ENCODE measurements at regions of chr16 and their contacts with region 1.

Region 1: GRCh38 chr16:27367461-27368357 is 34.3 kb upstream of the IL21R start:
- DNase-seq: peak; percentile 73 to 97
- ATAC-seq: peak; percentile 85 to 88 (median 87)
- H3K4me3 ChIP-seq: peak overlapping the region; percentile 2
- H3K4me3 Mint-ChIP-seq: peak overlapping the region; percentile 45
- H3K27ac ChIP-seq: peak overlapping the region; percentile 96
- H3K27ac Mint-ChIP-seq: peak overlapping the region; percentile 94 to 95
- H3K4me1 ChIP-seq: peaks cover 46% of the 10 kb centered on the region
- H3K4me1 Mint-ChIP-seq: peaks cover 0 to 28% of the 10 kb centered on the region in 2 donors
- H3K27me3 ChIP-seq: no peaks in the 10 kb centered on the region
- H3K27me3 Mint-ChIP-seq: no peaks in the 10 kb centered on the region
- CTCF ChIP-seq: peak; percentile 65

Region 2: GRCh38 chr16:27154705-27155521 is 212.8 kb before region 1 on chr16:
- intact Hi-C with region 1: loop called (anchors 2 kb)
- DNase-seq: peak; percentile 61 to 83
- ATAC-seq: peak; percentile 77 to 96 (median 86)
- H3K4me3 ChIP-seq: no peak overlapping the region
- H3K4me3 Mint-ChIP-seq: no peak overlapping the region
- H3K27ac ChIP-seq: no peak overlapping the region
- H3K27ac Mint-ChIP-seq: no peak overlapping the region
- H3K4me1 ChIP-seq: peaks cover 7% of the 10 kb centered on the region
- H3K4me1 Mint-ChIP-seq: peaks cover 8 to 10% of the 10 kb centered on the region in 2 donors
- H3K27me3 ChIP-seq: no peaks in the 10 kb centered on the region
- H3K27me3 Mint-ChIP-seq: no peaks in the 10 kb centered on the region
- CTCF ChIP-seq: peak; percentile 97

Region 3: GRCh38 chr16:27179500-27180072 is 188.1 kb before region 1 on chr16:
- intact Hi-C with region 1: loop called (anchors 2 kb)
- DNase-seq: peak; percentile 80 to 92
- ATAC-seq: peak; percentile 98 to 100 (median 100)
- H3K4me3 ChIP-seq: no peak overlapping the region
- H3K4me3 Mint-ChIP-seq: peak overlapping the region; percentile 0
- H3K27ac ChIP-seq: no peak overlapping the region
- H3K27ac Mint-ChIP-seq: peak overlapping the region in 1 of 2 donors; percentile 71
- H3K4me1 ChIP-seq: peaks cover 13% of the 10 kb centered on the region
- H3K4me1 Mint-ChIP-seq: peaks cover 11 to 16% of the 10 kb centered on the region in 2 donors
- H3K27me3 ChIP-seq: no peaks in the 10 kb centered on the region
- H3K27me3 Mint-ChIP-seq: no peaks in the 10 kb centered on the region
- CTCF ChIP-seq: peak; percentile 87

Region 4: GRCh38 chr16:27313422-27314160 is 54.1 kb before region 1 on chr16 and contains the start of gene IL4R:
- intact Hi-C with region 1: loop called (anchors 5 kb)
- DNase-seq: peak; percentile 68 to 83
- ATAC-seq: peak; percentile 65 to 80 (median 79)
- H3K4me3 ChIP-seq: peak within 1 kb of the TSS; percentile 72
- H3K4me3 Mint-ChIP-seq: peak within 1 kb of the TSS; percentile 96
- H3K27ac ChIP-seq: peak within 1 kb of the TSS; percentile 92
- H3K27ac Mint-ChIP-seq: peak within 1 kb of the TSS; percentile 89 to 91
- H3K4me1 ChIP-seq: peaks cover 52% of the 10 kb centered on the region
- H3K4me1 Mint-ChIP-seq: peaks cover 36 to 50% of the 10 kb centered on the region in 2 donors
- H3K27me3 ChIP-seq: no peaks in the 10 kb centered on the region
- H3K27me3 Mint-ChIP-seq: no peaks in the 10 kb centered on the region
- CTCF ChIP-seq: no peak
- total RNA-seq, gene IL4R: 70.2 to 87.2 (median 86.0) TPM

Region 5: GRCh38 chr16:27401768-27402568 is 34.3 kb after region 1 on chr16 and contains the start of gene IL21R:
- intact Hi-C with region 1: loop called (anchors 5 kb)
- DNase-seq: peak; percentile 85 to 92
- ATAC-seq: peak; percentile 77 to 92 (median 89)
- H3K4me3 ChIP-seq: peak within 1 kb of the TSS; percentile 72
- H3K4me3 Mint-ChIP-seq: peak within 1 kb of the TSS; percentile 98
- H3K27ac ChIP-seq: peak within 1 kb of the TSS; percentile 92
- H3K27ac Mint-ChIP-seq: peak within 1 kb of the TSS; percentile 98 to 99
- H3K4me1 ChIP-seq: peaks cover 89% of the 10 kb centered on the region
- H3K4me1 Mint-ChIP-seq: peaks cover 74 to 82% of the 10 kb centered on the region in 2 donors
- H3K27me3 ChIP-seq: no peaks in the 10 kb centered on the region
- H3K27me3 Mint-ChIP-seq: no peaks in the 10 kb centered on the region
- CTCF ChIP-seq: no peak
- total RNA-seq, gene IL21R: 24.3 to 45.7 (median 26.5) TPM

Region 6: GRCh38 chr16:27426423-27427408 is 59.0 kb after region 1 on chr16:
- intact Hi-C with region 1: loop called (anchors 1 kb)
- DNase-seq: peak; percentile 67 to 84
- ATAC-seq: peak; percentile 92 to 95 (median 94)
- H3K4me3 ChIP-seq: no peak overlapping the region
- H3K4me3 Mint-ChIP-seq: peak overlapping the region; percentile 63
- H3K27ac ChIP-seq: peak overlapping the region; percentile 80
- H3K27ac Mint-ChIP-seq: peak overlapping the region; percentile 91 to 93
- H3K4me1 ChIP-seq: peaks cover 56% of the 10 kb centered on the region
- H3K4me1 Mint-ChIP-seq: peaks cover 30 to 35% of the 10 kb centered on the region in 2 donors
- H3K27me3 ChIP-seq: no peaks in the 10 kb centered on the region
- H3K27me3 Mint-ChIP-seq: no peaks in the 10 kb centered on the region
- CTCF ChIP-seq: no peak

Region 7: DNA sequence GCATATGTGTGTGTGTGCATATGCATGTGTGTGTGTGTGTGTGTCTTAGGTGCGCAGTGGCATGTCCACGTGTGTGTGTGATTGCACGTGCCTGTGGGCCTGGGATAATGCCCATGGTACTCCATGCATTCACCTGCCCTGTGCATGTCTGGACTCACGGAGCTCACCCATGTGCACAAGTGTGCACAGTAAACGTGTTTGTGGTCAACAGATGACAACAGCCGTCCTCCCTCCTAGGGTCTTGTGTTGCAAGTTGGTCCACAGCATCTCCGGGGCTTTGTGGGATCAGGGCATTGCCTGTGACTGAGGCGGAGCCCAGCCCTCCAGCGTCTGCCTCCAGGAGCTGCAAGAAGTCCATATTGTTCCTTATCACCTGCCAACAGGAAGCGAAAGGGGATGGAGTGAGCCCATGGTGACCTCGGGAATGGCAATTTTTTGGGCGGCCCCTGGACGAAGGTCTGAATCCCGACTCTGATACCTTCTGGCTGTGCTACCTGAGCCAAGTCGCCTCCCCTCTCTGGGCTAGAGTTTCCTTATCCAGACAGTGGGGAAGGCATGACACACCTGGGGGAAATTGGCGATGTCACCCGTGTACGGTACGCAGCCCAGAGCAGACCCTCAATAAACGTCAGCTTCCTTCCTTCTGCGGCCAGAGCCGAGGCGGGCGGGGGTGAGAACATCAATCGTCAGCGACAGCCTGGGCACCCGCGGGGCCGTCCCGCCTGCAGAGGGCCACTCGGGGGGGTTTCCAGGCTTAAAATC is 81.9 kb after region 1 on chr16:
- intact Hi-C with region 1: loop called (anchors 2 kb)
- DNase-seq: peak; percentile 88 to 93
- ATAC-seq: peak; percentile 68 to 89 (median 79)
- H3K4me3 ChIP-seq: no peak overlapping the region
- H3K4me3 Mint-ChIP-seq: peak overlapping the region; percentile 81
- H3K27ac ChIP-seq: peak overlapping the region; percentile 98
- H3K27ac Mint-ChIP-seq: peak overlapping the region; percentile 90 to 98
- H3K4me1 ChIP-seq: peaks cover 100% of the 10 kb centered on the region
- H3K4me1 Mint-ChIP-seq: peaks cover 75 to 81% of the 10 kb centered on the region in 2 donors
- H3K27me3 ChIP-seq: no peaks in the 10 kb centered on the region
- H3K27me3 Mint-ChIP-seq: no peaks in the 10 kb centered on the region
- CTCF ChIP-seq: no peak